Activated B cell treated with CpG ODN at 0.5 μM for 24 hours (primary cell): ENCODE measurements at regions of chr6 and their contacts with region 1.

Region 1: GRCh38 chr6:116461932-116462885 is 1.0 kb downstream of the CALHM6 start:
- DNase-seq: peak; percentile 68
- ATAC-seq: peak; percentile 84
- H3K4me3 Mint-ChIP-seq: peak overlapping the region; percentile 84
- H3K27ac Mint-ChIP-seq: peak overlapping the region; percentile 93
- H3K4me1 Mint-ChIP-seq: peaks cover 59% of the 10 kb centered on the region
- H3K27me3 Mint-ChIP-seq: no peaks in the 10 kb centered on the region
- CTCF ChIP-seq: no peak

Region 2: GRCh38 chr6:116010790-116011401 is 451.3 kb before region 1 on chr6:
- CTCF ChIA-PET with region 1: no interaction called
- POLR2A ChIA-PET with region 1: no interaction called
- intact Hi-C with region 1: loop called (anchors 10 kb)
- DNase-seq: peak; percentile 29
- ATAC-seq: peak; percentile 64
- H3K4me3 Mint-ChIP-seq: no peak overlapping the region
- H3K27ac Mint-ChIP-seq: no peak overlapping the region
- H3K4me1 Mint-ChIP-seq: peaks cover 32% of the 10 kb centered on the region
- H3K27me3 Mint-ChIP-seq: peaks cover 2% of the 10 kb centered on the region
- CTCF ChIP-seq: peak; percentile 45

Region 3: DNA sequence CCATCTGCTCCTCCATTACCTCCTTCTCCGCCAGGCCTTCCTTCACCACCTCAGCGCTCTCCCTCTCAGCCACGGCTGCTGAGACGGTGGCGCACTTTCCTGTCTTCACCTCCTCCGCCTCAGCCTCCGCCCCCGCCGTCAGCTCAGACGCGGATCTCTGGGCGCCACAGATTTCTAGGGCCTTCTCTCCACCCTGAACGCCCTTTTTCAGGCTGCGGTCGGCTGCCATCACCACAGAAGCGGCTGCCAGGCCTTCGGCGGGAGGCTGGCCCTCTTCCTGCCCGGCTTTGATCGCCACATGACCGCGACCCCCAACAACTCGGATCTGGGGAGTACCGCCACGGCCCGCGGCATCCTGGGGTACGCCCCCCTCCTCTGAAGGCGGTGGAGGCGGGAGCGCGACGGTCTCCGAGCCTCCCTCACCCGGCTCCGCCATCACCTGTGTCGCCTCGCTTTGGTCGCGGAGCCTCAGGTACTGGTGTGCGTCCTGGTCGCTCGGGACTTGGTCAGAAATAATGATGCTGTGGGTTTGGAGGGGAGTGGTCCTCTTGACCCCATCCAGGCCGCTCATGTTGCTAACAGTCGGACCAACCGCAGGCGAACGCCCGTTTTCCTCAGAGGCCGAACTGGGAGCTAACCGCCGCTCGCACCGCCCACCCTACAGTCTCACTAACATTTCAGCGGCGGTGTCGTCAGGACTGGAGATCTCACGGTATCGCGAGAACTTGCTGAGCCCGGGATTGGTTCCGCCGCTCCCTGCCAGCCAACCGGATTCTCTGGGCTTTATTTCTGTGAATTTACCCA is 182.7 kb before region 1 on chr6 and contains the start of gene TSPYL1:
- CTCF ChIA-PET with region 1: no interaction called
- POLR2A ChIA-PET with region 1: interaction called, 8 read pairs
- intact Hi-C with region 1: loop called (anchors 2 kb)
- DNase-seq: peak; percentile 85
- ATAC-seq: peak; percentile 91
- H3K4me3 Mint-ChIP-seq: peak within 1 kb of the TSS; percentile 95
- H3K27ac Mint-ChIP-seq: peak within 1 kb of the TSS; percentile 100
- H3K4me1 Mint-ChIP-seq: peaks cover 71% of the 10 kb centered on the region
- H3K27me3 Mint-ChIP-seq: no peaks in the 10 kb centered on the region
- CTCF ChIP-seq: no peak
- total RNA-seq, gene TSPYL1: 67.4 and 68.4 TPM in 2 replicates

Region 4: DNA sequence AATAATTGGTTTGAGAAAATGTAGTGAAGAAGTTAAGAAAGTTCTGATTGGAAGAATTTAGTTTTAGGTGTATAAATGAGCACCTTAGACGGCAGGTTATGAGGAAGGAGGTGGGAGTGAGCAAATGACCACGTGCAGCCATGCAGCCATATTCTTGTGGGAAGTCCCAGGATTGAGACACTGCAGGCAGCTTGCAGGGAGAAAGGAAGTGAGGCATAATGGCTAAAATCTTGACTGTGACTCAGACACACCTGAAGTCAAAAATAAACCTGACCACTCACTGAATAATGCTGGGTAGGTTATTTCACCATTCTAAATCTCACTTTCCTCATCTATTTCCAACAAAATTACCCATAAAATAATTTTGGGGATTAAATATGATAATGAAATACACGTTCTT is 74.8 kb before region 1 on chr6:
- CTCF ChIA-PET with region 1: no interaction called
- POLR2A ChIA-PET with region 1: no interaction called
- intact Hi-C with region 1: loop called (anchors 5 kb)
- DNase-seq: no peak
- ATAC-seq: peak; percentile 53
- H3K4me3 Mint-ChIP-seq: peak overlapping the region; percentile 67
- H3K27ac Mint-ChIP-seq: peak overlapping the region; percentile 72
- H3K4me1 Mint-ChIP-seq: peaks cover 60% of the 10 kb centered on the region
- H3K27me3 Mint-ChIP-seq: no peaks in the 10 kb centered on the region
- CTCF ChIP-seq: no peak

Region 5: DNA sequence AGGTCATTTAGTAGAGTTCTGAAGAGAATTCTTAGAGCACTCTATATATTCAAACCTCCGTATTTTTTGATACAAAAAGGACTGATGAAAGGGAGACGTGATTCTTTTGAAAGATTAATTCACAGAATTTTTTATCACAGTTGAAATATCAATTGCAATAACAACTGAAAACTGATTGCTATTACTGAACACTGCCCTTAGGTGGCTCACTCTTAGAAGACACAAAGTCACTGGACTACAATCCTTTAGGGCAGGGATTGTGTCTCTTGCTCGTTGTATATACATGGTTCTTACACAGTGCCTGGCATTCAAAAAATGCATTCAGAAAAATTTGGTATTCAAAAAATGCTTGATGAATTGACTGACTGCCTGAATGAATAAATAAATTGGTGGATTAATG is 18.1 kb before region 1 on chr6:
- CTCF ChIA-PET with region 1: interaction called, 4 read pairs
- POLR2A ChIA-PET with region 1: interaction called, 8 read pairs
- intact Hi-C with region 1: loop called (anchors 2 kb)
- DNase-seq: no peak
- ATAC-seq: peak; percentile 78
- H3K4me3 Mint-ChIP-seq: no peak overlapping the region
- H3K27ac Mint-ChIP-seq: no peak overlapping the region
- H3K4me1 Mint-ChIP-seq: peaks cover 26% of the 10 kb centered on the region
- H3K27me3 Mint-ChIP-seq: no peaks in the 10 kb centered on the region
- CTCF ChIP-seq: no peak

Region 6: GRCh38 chr6:116476002-116476678 is 13.9 kb after region 1 on chr6:
- CTCF ChIA-PET with region 1: interaction called, 3 read pairs
- POLR2A ChIA-PET with region 1: interaction called, 5 read pairs
- intact Hi-C with region 1: loop called (anchors 1 kb)
- DNase-seq: no peak
- ATAC-seq: peak; percentile 97
- H3K4me3 Mint-ChIP-seq: peak overlapping the region; percentile 70
- H3K27ac Mint-ChIP-seq: peak overlapping the region; percentile 93
- H3K4me1 Mint-ChIP-seq: peaks cover 34% of the 10 kb centered on the region
- H3K27me3 Mint-ChIP-seq: no peaks in the 10 kb centered on the region
- CTCF ChIP-seq: no peak

Region 7: DNA sequence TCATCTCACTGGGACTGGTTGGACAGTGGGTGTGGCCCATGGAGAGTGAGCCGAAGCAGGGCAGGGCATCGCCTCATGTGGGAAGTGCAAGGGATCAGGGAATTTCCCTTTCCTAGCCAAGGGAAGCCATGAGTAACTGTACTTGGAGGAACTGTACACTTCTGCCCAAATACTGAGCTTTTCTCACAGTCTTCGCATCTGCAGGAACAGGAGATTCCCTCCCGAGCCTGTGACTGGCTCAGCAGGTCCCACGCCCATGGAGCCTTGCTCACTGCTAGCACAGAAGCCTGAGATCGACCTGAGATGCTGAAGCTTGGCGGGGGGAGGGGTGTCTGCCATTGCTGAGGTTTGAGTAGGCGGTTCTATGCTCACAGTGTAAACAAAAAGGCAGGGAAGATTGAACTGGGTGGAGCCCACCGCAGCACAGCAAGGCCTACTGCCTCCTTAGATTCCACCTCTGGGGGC is 38.8 kb after region 1 on chr6:
- CTCF ChIA-PET with region 1: no interaction called
- POLR2A ChIA-PET with region 1: no interaction called
- intact Hi-C with region 1: no loop called
- DNase-seq: no peak
- ATAC-seq: no peak
- H3K4me3 Mint-ChIP-seq: no peak overlapping the region
- H3K27ac Mint-ChIP-seq: no peak overlapping the region
- H3K4me1 Mint-ChIP-seq: peaks cover 7% of the 10 kb centered on the region
- H3K27me3 Mint-ChIP-seq: peaks cover 11% of the 10 kb centered on the region
- CTCF ChIP-seq: no peak

Region 8: DNA sequence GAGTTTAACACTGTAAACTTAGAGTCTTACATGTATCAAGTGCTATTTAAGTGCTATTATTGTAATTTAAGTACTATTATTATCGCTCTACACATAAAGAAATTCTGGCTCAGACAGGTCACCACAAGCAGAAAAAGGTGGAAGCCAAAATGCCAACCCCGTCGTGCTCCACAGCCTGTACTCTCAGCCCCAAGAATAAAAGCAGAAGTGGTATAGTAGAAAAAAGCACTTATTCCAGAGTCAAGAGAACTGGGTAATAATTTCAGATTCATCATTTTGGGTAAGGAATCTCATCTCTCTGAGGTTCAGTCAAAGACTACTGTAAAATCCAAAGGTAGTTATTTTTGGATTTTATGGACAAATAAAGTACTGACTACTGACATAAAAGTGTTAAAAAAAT is 205.4 kb after region 1 on chr6:
- CTCF ChIA-PET with region 1: no interaction called
- POLR2A ChIA-PET with region 1: no interaction called
- intact Hi-C with region 1: loop called (anchors 1 kb)
- DNase-seq: no peak
- ATAC-seq: peak; percentile 62
- H3K4me3 Mint-ChIP-seq: peak overlapping the region; percentile 100
- H3K27ac Mint-ChIP-seq: peak overlapping the region; percentile 99
- H3K4me1 Mint-ChIP-seq: peaks cover 41% of the 10 kb centered on the region
- H3K27me3 Mint-ChIP-seq: peaks cover 8% of the 10 kb centered on the region
- CTCF ChIP-seq: no peak